A549 (cell line): ENCODE measurements at regions of chr15 and their contacts with region 1.

Region 1: GRCh38 chr15:64836023-64836536 is 5.6 kb upstream of the PLEKHO2 start:
- DNase-seq: no peak
- ATAC-seq: peak; percentile 17; a peak in 4 of 6 replicates
- H3K4me3 ChIP-seq: no peak overlapping the region
- H3K27ac ChIP-seq: peak overlapping the region; percentile 8 to 61; a peak in 4 of 6 replicates
- H3K4me1 ChIP-seq: peaks cover 15% of the 10 kb centered on the region
- CTCF ChIP-seq: no peak; the same call in 2 of the 3 replicates
- EP300 ChIP-seq: no peak
- POLR2A ChIP-seq: no peak
- RAD21 ChIP-seq: no peak

Region 2: DNA sequence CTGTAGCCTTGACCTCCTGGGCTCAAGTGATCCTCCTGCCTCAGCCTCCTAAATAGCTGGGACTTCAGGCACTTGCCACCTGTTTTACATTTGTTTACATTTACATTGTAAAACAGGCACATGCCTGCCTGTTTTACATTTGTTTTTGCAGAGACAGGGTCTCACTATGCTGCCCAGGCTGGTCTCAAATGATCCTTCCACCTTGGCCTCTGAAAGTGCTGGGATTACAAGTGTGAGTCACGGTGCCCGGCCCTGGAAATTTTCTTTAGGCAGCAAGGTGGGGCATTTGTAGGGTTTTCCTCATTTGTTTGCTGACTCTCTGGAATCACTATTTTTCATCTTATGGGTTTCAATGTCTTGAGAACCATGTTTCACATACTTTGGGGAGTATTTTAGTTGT is 35.6 kb before region 1 on chr15:
- CTCF ChIA-PET with region 1: interaction called, 12 read pairs
- POLR2A ChIA-PET with region 1: no interaction called
- DNase-seq: peak in 1 of 2 experiments; percentile 33
- ATAC-seq: peak; percentile 30 to 56; a peak in 4 of 6 replicates
- H3K4me3 ChIP-seq: no peak overlapping the region
- H3K27ac ChIP-seq: no peak overlapping the region
- H3K4me1 ChIP-seq: peaks cover 7% of the 10 kb centered on the region; the same call in 1 of the 3 replicates
- CTCF ChIP-seq: no peak
- EP300 ChIP-seq: no peak
- POLR2A ChIP-seq: no peak
- RAD21 ChIP-seq: no peak

Region 3: DNA sequence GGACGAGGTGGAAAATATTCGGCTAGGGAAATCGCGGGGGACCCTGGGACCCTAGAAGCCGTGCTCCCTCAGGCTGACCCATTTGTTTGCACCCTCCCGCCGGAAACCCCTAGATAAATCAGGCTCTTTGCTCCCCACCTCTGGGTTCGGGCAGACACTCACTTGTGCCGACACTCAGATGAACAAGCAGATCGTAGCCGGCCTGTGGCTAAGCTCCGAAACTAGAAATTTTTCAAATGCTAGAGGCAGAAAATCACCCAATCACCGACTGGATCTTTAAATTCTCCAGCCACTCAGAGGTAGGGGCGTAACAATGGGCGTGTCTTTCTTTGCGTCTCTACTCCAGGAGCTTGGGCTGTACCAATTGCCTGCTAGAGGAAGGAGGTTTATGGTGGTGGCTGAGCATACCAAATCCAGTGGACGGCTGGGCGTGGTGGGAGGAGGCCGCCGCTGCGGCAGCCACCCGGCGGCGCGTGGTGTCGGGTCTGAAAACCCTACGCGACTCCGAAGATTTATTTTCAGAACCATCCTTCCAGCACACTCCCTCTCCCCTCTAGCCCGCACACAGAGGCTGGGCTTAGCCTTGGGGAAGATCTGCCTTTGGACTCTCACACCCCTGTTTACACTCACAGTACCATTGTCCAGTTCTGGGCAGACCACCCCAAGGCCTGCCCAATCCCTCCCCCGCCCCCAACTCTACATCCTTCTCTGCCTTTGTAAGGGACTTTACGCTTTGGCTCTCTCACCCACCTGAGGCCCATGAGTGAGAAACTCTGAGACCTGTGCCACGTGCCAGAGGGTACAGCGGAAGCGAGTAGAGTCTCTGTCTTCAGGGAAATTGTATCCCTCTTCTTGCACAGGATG is 10.4 kb before region 1 on chr15 and contains the start of gene PIF1:
- CTCF ChIA-PET with region 1: interaction called, 25 read pairs
- POLR2A ChIA-PET with region 1: interaction called, 11 read pairs
- DNase-seq: peak; percentile 98 to 99
- ATAC-seq: peak; percentile 99
- H3K4me3 ChIP-seq: peak within 1 kb of the TSS; percentile 61
- H3K27ac ChIP-seq: peak within 1 kb of the TSS; percentile 74 to 91
- H3K4me1 ChIP-seq: peaks cover 9% of the 10 kb centered on the region
- CTCF ChIP-seq: no peak
- EP300 ChIP-seq: no peak
- POLR2A ChIP-seq: peak; percentile 84
- RAD21 ChIP-seq: no peak
- polyA plus RNA-seq, gene PIF1: 8.5 and 11.1 TPM in 2 replicates

Region 4: GRCh38 chr15:64856429-64857145 is 20.5 kb after region 1 on chr15:
- CTCF ChIA-PET with region 1: interaction called, 16 read pairs
- POLR2A ChIA-PET with region 1: interaction called, 6 read pairs
- DNase-seq: peak in 1 of 2 experiments; percentile 38
- ATAC-seq: peak in 1 of 2 experiments; percentile 63; a peak in 3 of 6 replicates
- H3K4me3 ChIP-seq: no peak overlapping the region
- H3K27ac ChIP-seq: peak overlapping the region; percentile 31 to 63; a peak in 4 of 6 replicates
- H3K4me1 ChIP-seq: peaks cover 30% of the 10 kb centered on the region
- CTCF ChIP-seq: no peak
- EP300 ChIP-seq: no peak
- POLR2A ChIP-seq: no peak
- RAD21 ChIP-seq: no peak

Region 5: GRCh38 chr15:64961013-64961412 is 124.9 kb after region 1 on chr15:
- CTCF ChIA-PET with region 1: no interaction called
- POLR2A ChIA-PET with region 1: no interaction called
- DNase-seq: no peak
- ATAC-seq: no peak
- H3K4me3 ChIP-seq: no peak overlapping the region
- H3K27ac ChIP-seq: no peak overlapping the region
- H3K4me1 ChIP-seq: no peaks in the 10 kb centered on the region
- CTCF ChIP-seq: no peak
- EP300 ChIP-seq: no peak
- POLR2A ChIP-seq: no peak
- RAD21 ChIP-seq: no peak